ENCODE measurements at regions of chr16 and their contacts with region 1.

Region 1: DNA sequence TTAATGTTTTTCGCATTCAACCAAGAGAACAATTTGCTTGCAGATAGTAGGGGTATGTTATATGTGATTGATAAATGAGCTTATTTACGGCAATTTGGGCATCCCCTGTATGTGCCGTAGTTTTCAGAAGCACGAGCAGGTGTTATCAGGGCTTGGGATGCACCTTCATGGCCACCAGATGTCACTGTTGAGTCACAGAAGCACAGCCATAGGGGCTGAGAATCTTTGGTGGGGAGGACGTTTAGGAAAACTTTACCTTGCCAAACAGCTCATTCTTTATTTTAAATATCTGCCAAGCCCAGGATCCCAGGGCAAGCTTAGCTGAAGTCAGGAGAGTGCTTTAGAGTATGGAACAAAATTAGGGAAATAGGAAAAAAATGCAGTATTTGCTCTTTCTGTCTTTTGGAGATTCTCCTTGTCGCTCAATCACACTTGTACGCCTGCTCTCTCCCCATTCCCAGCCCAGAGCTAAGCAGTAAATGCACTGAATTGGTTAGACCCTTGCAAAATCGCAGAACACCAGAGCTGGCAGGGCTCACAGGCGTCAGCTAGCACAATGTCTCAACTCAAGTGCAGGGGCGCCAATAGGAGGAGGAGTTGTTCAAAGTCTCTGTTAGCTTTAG is 93.6 kb upstream of the MPHOSPH6 start:
- DNase-seq: peak; percentile 75 to 89 (median 82)
- ATAC-seq: peak; percentile 99
- H3K4me3 ChIP-seq: no peak overlapping the region
- H3K27ac ChIP-seq: no peak overlapping the region
- H3K4me1 ChIP-seq: no peaks in the 10 kb centered on the region
- H3K27me3 ChIP-seq: no peaks in the 10 kb centered on the region
- CTCF ChIP-seq: peak; percentile 87 to 95 (median 92)
- EP300 ChIP-seq: no peak
- POLR2A ChIP-seq: no peak
- RAD21 ChIP-seq: peak; percentile 83 to 93

Region 2: DNA sequence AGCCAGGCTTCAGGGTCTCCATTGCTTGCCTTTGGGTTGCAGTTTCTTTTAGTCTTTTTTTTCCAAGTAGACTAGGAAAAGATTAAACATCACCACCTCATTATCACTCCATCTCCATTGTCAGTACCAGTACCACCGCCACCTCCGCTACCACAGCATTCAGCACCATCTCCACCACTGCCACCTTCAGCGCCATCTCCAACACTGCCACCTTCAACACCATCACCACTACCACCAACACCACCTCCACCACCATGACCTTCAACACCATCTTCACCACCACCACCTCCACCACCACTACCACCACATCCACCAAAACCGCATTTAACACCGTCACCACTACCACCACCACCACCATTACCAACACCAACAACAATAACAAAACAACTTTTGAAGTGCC is 47.9 kb after region 1 on chr16:
- CTCF ChIA-PET with region 1: no interaction called
- POLR2A ChIA-PET with region 1: no interaction called
- in situ Hi-C with region 1: no loop called
- intact Hi-C with region 1: no loop called
- DNase-seq: no peak
- ATAC-seq: no peak
- H3K4me3 ChIP-seq: no peak overlapping the region
- H3K27ac ChIP-seq: no peak overlapping the region
- H3K4me1 ChIP-seq: no peaks in the 10 kb centered on the region
- H3K27me3 ChIP-seq: no peaks in the 10 kb centered on the region
- CTCF ChIP-seq: no peak
- EP300 ChIP-seq: no peak
- POLR2A ChIP-seq: no peak
- RAD21 ChIP-seq: no peak

Region 3: GRCh38 chr16:82439671-82440293 is 176.2 kb after region 1 on chr16:
- CTCF ChIA-PET with region 1: no interaction called
- POLR2A ChIA-PET with region 1: no interaction called
- in situ Hi-C with region 1: no loop called
- intact Hi-C with region 1: no loop called
- DNase-seq: peak in 3 of 4 experiments; percentile 16 to 21 (median 17)
- ATAC-seq: no peak
- H3K4me3 ChIP-seq: no peak overlapping the region
- H3K27ac ChIP-seq: no peak overlapping the region
- H3K4me1 ChIP-seq: no peaks in the 10 kb centered on the region
- H3K27me3 ChIP-seq: no peaks in the 10 kb centered on the region
- CTCF ChIP-seq: peak; percentile 9 to 37 (median 19); a peak in 2 of 6 replicates
- EP300 ChIP-seq: no peak
- POLR2A ChIP-seq: no peak
- RAD21 ChIP-seq: no peak

Region 4: DNA sequence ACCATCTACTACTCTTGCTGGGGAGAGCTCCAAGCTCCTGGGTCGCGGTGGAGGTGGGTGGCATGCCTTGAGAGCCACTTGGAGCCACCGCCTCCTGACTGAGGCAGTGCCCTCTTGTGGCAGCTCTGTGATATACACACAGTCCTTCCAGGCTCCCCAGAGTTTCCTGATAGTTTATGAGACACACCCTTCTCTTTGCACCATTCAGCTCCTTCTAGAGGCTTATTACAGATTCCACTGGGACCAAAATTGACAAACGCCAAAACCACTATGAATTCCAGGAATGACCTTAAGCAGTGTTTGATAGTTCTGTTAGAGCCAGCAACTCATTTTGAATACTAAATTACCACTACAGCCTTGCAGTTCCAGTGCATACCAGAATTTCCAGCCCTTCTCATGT is 193.1 kb after region 1 on chr16:
- CTCF ChIA-PET with region 1: interaction called, 6 read pairs
- POLR2A ChIA-PET with region 1: no interaction called
- in situ Hi-C with region 1: no loop called
- intact Hi-C with region 1: loop called (anchors 1 kb)
- DNase-seq: peak; percentile 60 to 74 (median 70)
- ATAC-seq: peak; percentile 95
- H3K4me3 ChIP-seq: no peak overlapping the region
- H3K27ac ChIP-seq: no peak overlapping the region
- H3K4me1 ChIP-seq: no peaks in the 10 kb centered on the region
- H3K27me3 ChIP-seq: no peaks in the 10 kb centered on the region
- CTCF ChIP-seq: peak; percentile 61 to 71 (median 67)
- EP300 ChIP-seq: no peak
- POLR2A ChIP-seq: no peak
- RAD21 ChIP-seq: peak in 1 of 2 experiments; percentile 60; a peak in 2 of 4 replicates

Region 5: GRCh38 chr16:82639666-82640336 is 376.2 kb after region 1 on chr16:
- CTCF ChIA-PET with region 1: interaction called, 3 read pairs
- POLR2A ChIA-PET with region 1: no interaction called
- in situ Hi-C with region 1: no loop called
- intact Hi-C with region 1: loop called (anchors 2 kb)
- DNase-seq: peak; percentile 46 to 63 (median 62)
- ATAC-seq: peak; percentile 86
- H3K4me3 ChIP-seq: no peak overlapping the region
- H3K27ac ChIP-seq: no peak overlapping the region
- H3K4me1 ChIP-seq: no peaks in the 10 kb centered on the region
- H3K27me3 ChIP-seq: peaks cover 0 to 4% of the 10 kb centered on the region in 2 experiments; a peak in 1 of 5 replicates
- CTCF ChIP-seq: peak; percentile 54 to 82 (median 66)
- EP300 ChIP-seq: no peak
- POLR2A ChIP-seq: no peak
- RAD21 ChIP-seq: peak; percentile 36 to 63

Region 6: DNA sequence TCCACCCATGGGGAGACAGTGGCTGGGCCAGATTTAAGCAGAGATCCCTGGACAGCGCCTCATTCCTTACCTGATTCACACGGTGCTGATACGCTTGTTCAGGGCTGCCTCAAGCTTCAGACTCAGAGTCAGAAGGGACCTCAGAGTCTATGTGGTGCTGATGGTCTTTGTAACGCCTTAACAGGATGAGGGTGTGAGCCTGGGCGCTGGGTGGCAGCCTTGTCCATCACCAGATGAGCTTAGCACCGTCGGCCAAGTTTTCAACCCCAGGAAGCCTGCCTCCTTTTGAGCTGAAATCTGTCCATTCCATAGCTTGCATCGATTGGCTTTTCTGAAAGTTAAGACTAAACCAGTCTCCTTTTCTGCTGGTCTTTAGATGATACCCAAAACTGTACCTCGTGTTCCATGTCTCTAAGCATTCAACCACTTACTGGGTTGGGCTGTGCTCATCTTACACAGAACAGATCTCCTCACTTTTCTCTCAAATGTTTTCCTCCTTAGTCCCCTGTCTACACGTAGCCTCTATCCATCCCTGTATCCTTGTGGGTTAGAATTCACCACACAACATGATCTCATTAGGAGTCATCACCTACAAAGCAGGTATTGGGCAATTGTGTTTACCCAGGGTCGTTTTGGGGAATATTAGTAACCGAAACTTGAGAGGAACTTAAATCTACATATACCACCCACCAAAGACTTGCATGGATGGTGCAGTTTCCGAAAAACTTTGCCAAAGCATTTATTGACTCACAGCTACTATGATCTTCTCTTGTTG is 936.6 kb after region 1 on chr16:
- CTCF ChIA-PET with region 1: no interaction called
- POLR2A ChIA-PET with region 1: no interaction called
- in situ Hi-C with region 1: loop called (anchors 10 kb)
- intact Hi-C with region 1: no loop called
- DNase-seq: peak in 1 of 4 experiments; percentile 6
- ATAC-seq: no peak; the same call in 2 of the 3 replicates
- H3K4me3 ChIP-seq: no peak overlapping the region
- H3K27ac ChIP-seq: no peak overlapping the region
- H3K4me1 ChIP-seq: no peaks in the 10 kb centered on the region
- H3K27me3 ChIP-seq: no peaks in the 10 kb centered on the region
- CTCF ChIP-seq: peak in 2 of 3 experiments; percentile 18 to 26; a peak in 2 of 6 replicates
- EP300 ChIP-seq: no peak
- POLR2A ChIP-seq: no peak
- RAD21 ChIP-seq: peak in 1 of 2 experiments; percentile 26; a peak in 1 of 4 replicates

Region 7: GRCh38 chr16:83215406-83216001 is 951.9 kb after region 1 on chr16:
- CTCF ChIA-PET with region 1: no interaction called
- POLR2A ChIA-PET with region 1: no interaction called
- in situ Hi-C with region 1: no loop called
- intact Hi-C with region 1: loop called (anchors 1 kb)
- DNase-seq: peak; percentile 59 to 83 (median 76)
- ATAC-seq: peak; percentile 83
- H3K4me3 ChIP-seq: no peak overlapping the region
- H3K27ac ChIP-seq: no peak overlapping the region
- H3K4me1 ChIP-seq: no peaks in the 10 kb centered on the region
- H3K27me3 ChIP-seq: no peaks in the 10 kb centered on the region
- CTCF ChIP-seq: peak; percentile 71 to 83 (median 76)
- EP300 ChIP-seq: no peak
- POLR2A ChIP-seq: no peak
- RAD21 ChIP-seq: peak in 1 of 2 experiments; percentile 53; a peak in 2 of 4 replicates

Region 8: DNA sequence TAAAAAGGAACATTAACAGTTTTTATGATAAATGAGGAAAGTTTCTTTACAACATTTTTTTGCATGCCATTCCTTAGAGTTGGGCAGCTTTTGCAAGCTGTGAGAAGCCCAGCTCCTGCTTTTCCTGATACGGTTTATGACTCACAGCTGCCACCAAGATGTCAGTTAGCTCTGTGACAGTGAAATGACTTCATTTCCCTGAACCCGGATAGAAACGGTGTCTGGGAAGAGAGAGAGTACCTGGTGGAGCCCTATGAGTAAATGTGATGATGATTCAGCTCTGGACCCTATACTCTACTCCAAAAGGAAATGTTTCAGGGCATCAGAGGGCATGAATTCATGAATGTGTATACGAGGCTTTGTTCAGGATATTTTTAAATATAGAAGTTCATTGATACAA is 1177.9 kb after region 1 on chr16:
- CTCF ChIA-PET with region 1: no interaction called
- POLR2A ChIA-PET with region 1: no interaction called
- in situ Hi-C with region 1: loop called (anchors 10 kb)
- intact Hi-C with region 1: loop called (anchors 5 kb)
- DNase-seq: no peak
- ATAC-seq: no peak
- H3K4me3 ChIP-seq: no peak overlapping the region
- H3K27ac ChIP-seq: no peak overlapping the region
- H3K4me1 ChIP-seq: no peaks in the 10 kb centered on the region
- H3K27me3 ChIP-seq: no peaks in the 10 kb centered on the region; a peak in 1 of 5 replicates
- CTCF ChIP-seq: no peak
- EP300 ChIP-seq: no peak
- POLR2A ChIP-seq: no peak
- RAD21 ChIP-seq: no peak

Region 9: GRCh38 chr16:83449861-83450260 is 1186.2 kb after region 1 on chr16:
- CTCF ChIA-PET with region 1: interaction called, 3 read pairs
- POLR2A ChIA-PET with region 1: no interaction called
- in situ Hi-C with region 1: loop called (anchors 10 kb)
- intact Hi-C with region 1: loop called (anchors 5 kb)
- DNase-seq: no peak
- ATAC-seq: no peak
- H3K4me3 ChIP-seq: no peak overlapping the region
- H3K27ac ChIP-seq: no peak overlapping the region
- H3K4me1 ChIP-seq: no peaks in the 10 kb centered on the region
- H3K27me3 ChIP-seq: 0 out of 5 replicates have a peak, but pooled peaks cover 0 to 2% of the 10 kb centered on the region in 2 experiments
- CTCF ChIP-seq: no peak
- EP300 ChIP-seq: no peak
- POLR2A ChIP-seq: no peak
- RAD21 ChIP-seq: no peak